CD8-positive, alpha-beta T cell (primary cell): ENCODE measurements at regions of chr10 and their contacts with region 1.

Region 1: GRCh38 chr10:132637477-132638129 is 100.0 kb downstream of the INPP5A start:
- DNase-seq: peak in 3 of 9 experiments; percentile 26 to 70 (median 61)
- ATAC-seq: peak; percentile 72
- H3K4me3 ChIP-seq: no peak overlapping the region
- H3K4me3 Mint-ChIP-seq: no peak overlapping the region
- H3K27ac ChIP-seq: no peak overlapping the region
- H3K27ac Mint-ChIP-seq: no peak overlapping the region
- H3K4me1 ChIP-seq: peaks cover 4% of the 10 kb centered on the region
- H3K4me1 Mint-ChIP-seq: peaks cover 28% of the 10 kb centered on the region
- H3K27me3 ChIP-seq: no peaks in the 10 kb centered on the region
- H3K27me3 Mint-ChIP-seq: no peaks in the 10 kb centered on the region
- CTCF ChIP-seq: peak; percentile 67

Region 2: DNA sequence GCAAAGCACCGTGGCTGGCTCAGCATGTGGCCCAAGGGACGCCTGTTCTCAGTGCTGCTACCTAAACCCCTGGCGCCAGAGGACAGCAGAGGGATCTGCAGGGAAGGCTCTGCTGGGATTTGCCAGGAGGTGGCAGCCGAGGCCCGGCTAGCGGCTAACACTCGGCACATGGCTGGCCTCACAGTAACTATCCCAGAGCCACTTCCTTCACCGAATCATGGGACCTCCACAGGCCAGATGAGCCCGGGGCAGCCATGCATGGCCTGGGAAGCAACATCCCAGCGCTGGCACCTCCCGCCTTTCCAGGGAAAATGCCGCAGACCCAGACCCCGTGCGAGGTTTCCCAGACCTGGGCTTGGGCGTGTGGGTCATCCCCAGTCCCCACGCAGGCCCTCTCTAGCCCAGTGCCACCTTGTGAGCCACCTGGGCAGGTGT is 414.4 kb before region 1 on chr10:
- CTCF ChIA-PET with region 1: no interaction called
- POLR2A ChIA-PET with region 1: no interaction called
- intact Hi-C with region 1: loop called in 1 of 2 experiments (anchors 10 kb)
- DNase-seq: peak; percentile 21 to 73 (median 61)
- ATAC-seq: peak; percentile 91
- H3K4me3 ChIP-seq: no peak overlapping the region
- H3K4me3 Mint-ChIP-seq: no peak overlapping the region
- H3K27ac ChIP-seq: no peak overlapping the region
- H3K27ac Mint-ChIP-seq: no peak overlapping the region
- H3K4me1 ChIP-seq: no peaks in the 10 kb centered on the region
- H3K4me1 Mint-ChIP-seq: peaks cover 1% of the 10 kb centered on the region
- H3K27me3 ChIP-seq: no peaks in the 10 kb centered on the region
- H3K27me3 Mint-ChIP-seq: no peaks in the 10 kb centered on the region
- CTCF ChIP-seq: peak; percentile 46

Region 3: DNA sequence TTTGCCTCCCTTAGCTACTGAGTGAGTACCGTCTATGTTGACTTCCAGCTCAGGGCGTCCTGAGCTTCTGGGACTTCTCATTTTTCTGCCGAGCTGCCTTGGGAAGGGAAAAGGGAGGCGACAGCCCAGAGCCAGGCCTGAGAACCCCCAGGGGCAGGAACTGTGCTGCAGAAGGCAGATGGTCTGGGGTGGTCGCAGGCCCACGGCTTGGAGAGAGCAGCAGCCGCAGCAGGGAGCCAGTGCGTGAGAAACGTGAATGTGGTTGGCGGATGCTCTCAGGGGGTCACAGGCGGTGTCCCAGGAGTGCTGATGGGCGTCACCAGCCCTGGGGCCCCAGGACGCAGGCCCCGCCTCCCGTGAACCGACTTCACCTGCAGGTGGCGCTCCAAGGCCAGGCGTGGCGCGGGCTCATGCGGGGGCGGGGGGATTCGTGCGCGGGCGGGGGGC is 249.8 kb before region 1 on chr10:
- CTCF ChIA-PET with region 1: no interaction called
- POLR2A ChIA-PET with region 1: no interaction called
- intact Hi-C with region 1: loop called (anchors 1 to 2 kb)
- DNase-seq: peak; percentile 66 to 89 (median 81)
- ATAC-seq: peak; percentile 94
- H3K4me3 ChIP-seq: peak overlapping the region in 1 of 2 experiments; percentile 18
- H3K4me3 Mint-ChIP-seq: peak overlapping the region; percentile 71
- H3K27ac ChIP-seq: no peak overlapping the region
- H3K27ac Mint-ChIP-seq: peak overlapping the region; percentile 64
- H3K4me1 ChIP-seq: peaks cover 5% of the 10 kb centered on the region
- H3K4me1 Mint-ChIP-seq: peaks cover 3% of the 10 kb centered on the region
- H3K27me3 ChIP-seq: no peaks in the 10 kb centered on the region
- H3K27me3 Mint-ChIP-seq: no peaks in the 10 kb centered on the region
- CTCF ChIP-seq: peak; percentile 44

Region 4: DNA sequence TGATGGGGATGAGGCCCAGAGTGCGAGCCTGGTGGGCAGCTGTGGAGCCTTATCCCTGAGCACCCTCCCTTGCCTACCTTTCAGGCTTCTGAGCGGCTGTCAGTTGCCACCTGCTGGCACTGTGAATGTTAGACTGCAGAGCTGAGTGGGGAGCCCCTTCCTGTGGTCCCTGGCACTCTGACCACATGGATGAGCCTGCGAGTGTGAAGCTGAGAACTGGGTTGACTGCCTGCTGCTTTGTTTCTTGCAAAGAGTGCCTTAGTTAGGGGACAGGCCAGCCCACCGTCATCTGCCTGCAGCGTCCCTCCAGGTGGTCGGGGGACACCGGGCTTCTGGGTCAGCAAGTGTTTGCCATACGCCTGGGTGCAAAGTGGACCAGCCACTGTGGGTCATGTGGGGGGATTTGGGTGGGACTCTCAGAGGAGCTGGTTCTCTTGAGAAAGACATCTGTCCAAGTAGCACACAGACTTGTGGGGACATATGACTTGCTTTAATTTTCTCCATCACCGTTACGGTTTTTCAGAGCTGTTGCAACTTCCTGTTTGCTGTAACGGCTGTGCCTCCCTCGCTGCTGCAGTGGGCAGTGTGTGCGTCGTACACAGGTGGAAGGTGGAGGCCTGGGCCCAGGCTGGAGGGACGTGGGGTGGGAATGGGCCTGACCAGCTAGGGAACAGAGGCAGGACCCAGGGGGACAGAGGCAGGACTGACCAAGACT is 86.4 kb before region 1 on chr10:
- CTCF ChIA-PET with region 1: interaction called, 3 read pairs
- POLR2A ChIA-PET with region 1: no interaction called
- intact Hi-C with region 1: loop called in 1 of 2 experiments (anchors 1 kb)
- DNase-seq: peak in 4 of 9 experiments; percentile 33 to 70 (median 55)
- ATAC-seq: peak; percentile 48
- H3K4me3 ChIP-seq: peak overlapping the region; percentile 21 to 26
- H3K4me3 Mint-ChIP-seq: peak overlapping the region; percentile 74
- H3K27ac ChIP-seq: no peak overlapping the region
- H3K27ac Mint-ChIP-seq: peak overlapping the region; percentile 90
- H3K4me1 ChIP-seq: peaks cover 49% of the 10 kb centered on the region
- H3K4me1 Mint-ChIP-seq: peaks cover 40% of the 10 kb centered on the region
- H3K27me3 ChIP-seq: no peaks in the 10 kb centered on the region
- H3K27me3 Mint-ChIP-seq: no peaks in the 10 kb centered on the region
- CTCF ChIP-seq: peak; percentile 31

Region 5: GRCh38 chr10:132912713-132913558 is 275.3 kb after region 1 on chr10:
- CTCF ChIA-PET with region 1: no interaction called
- POLR2A ChIA-PET with region 1: no interaction called
- intact Hi-C with region 1: no loop called
- DNase-seq: no peak
- ATAC-seq: no peak
- H3K4me3 ChIP-seq: no peak overlapping the region
- H3K4me3 Mint-ChIP-seq: peak overlapping the region; percentile 53
- H3K27ac ChIP-seq: no peak overlapping the region
- H3K27ac Mint-ChIP-seq: no peak overlapping the region
- H3K4me1 ChIP-seq: no peaks in the 10 kb centered on the region
- H3K4me1 Mint-ChIP-seq: peaks cover 2% of the 10 kb centered on the region
- H3K27me3 ChIP-seq: no peaks in the 10 kb centered on the region
- H3K27me3 Mint-ChIP-seq: peaks cover 2% of the 10 kb centered on the region
- CTCF ChIP-seq: no peak